H1 (cell line): ENCODE measurements at regions of chr1 and their contacts with region 1.

Region 1: GRCh38 chr1:214328770-214329469 is 48.0 kb downstream of the SMYD2 start:
- DNase-seq: peak; percentile 75 to 87
- H3K4me3 ChIP-seq: no peak overlapping the region
- H3K27ac ChIP-seq: no peak overlapping the region
- H3K4me1 ChIP-seq: no peaks in the 10 kb centered on the region; a peak in 2 of 7 replicates
- H3K27me3 ChIP-seq: no peaks in the 10 kb centered on the region
- CTCF ChIP-seq: peak; percentile 91 to 97 (median 96)
- EP300 ChIP-seq: peak in 1 of 2 experiments; percentile 8; a peak in 1 of 3 replicates
- POLR2A ChIP-seq: no peak
- RAD21 ChIP-seq: peak; percentile 100

Region 2: GRCh38 chr1:214241060-214241459 is 87.9 kb before region 1 on chr1:
- CTCF ChIA-PET with region 1: interaction called, 79 read pairs
- POLR2A ChIA-PET with region 1: no interaction called
- DNase-seq: no peak
- H3K4me3 ChIP-seq: no peak overlapping the region
- H3K27ac ChIP-seq: no peak overlapping the region
- H3K4me1 ChIP-seq: no peaks in the 10 kb centered on the region; a peak in 1 of 7 replicates
- H3K27me3 ChIP-seq: no peaks in the 10 kb centered on the region
- CTCF ChIP-seq: no peak
- EP300 ChIP-seq: no peak
- POLR2A ChIP-seq: no peak
- RAD21 ChIP-seq: no peak

Region 3: GRCh38 chr1:214296860-214297745 is 31.8 kb before region 1 on chr1:
- CTCF ChIA-PET with region 1: interaction called, 108 read pairs
- POLR2A ChIA-PET with region 1: no interaction called
- DNase-seq: no peak
- H3K4me3 ChIP-seq: peak overlapping the region in 1 of 4 experiments; percentile 13; a peak in 1 of 8 replicates
- H3K27ac ChIP-seq: no peak overlapping the region
- H3K4me1 ChIP-seq: peaks cover 0 to 4% (median 2%) of the 10 kb centered on the region in 4 experiments; a peak in 3 of 7 replicates
- H3K27me3 ChIP-seq: peaks cover 2 to 24% (median 21%) of the 10 kb centered on the region in 4 experiments
- CTCF ChIP-seq: no peak
- EP300 ChIP-seq: no peak
- POLR2A ChIP-seq: no peak
- RAD21 ChIP-seq: no peak

Region 4: DNA sequence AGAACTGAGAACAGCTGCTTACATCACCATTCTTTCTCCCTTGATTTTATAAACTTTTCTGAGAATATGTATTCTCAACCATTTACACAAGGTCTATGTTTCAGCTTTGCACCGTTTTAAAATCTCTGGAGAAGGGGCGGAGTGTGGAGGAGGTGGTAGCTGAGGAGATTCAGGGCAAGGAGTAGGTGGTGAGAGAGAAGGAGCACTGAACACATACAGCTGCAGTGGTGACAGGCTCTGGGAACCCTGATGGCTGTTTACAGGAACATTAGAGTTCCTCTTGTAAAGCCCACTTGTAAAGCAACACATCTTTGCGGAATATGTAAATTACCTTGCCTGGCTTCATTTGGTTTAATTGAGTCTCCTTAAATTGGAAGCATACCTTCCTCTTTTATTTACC is 41.7 kb after region 1 on chr1:
- CTCF ChIA-PET with region 1: interaction called, 16 read pairs
- POLR2A ChIA-PET with region 1: no interaction called
- DNase-seq: no peak
- H3K4me3 ChIP-seq: no peak overlapping the region
- H3K27ac ChIP-seq: no peak overlapping the region
- H3K4me1 ChIP-seq: no peaks in the 10 kb centered on the region; a peak in 1 of 7 replicates
- H3K27me3 ChIP-seq: no peaks in the 10 kb centered on the region
- CTCF ChIP-seq: no peak
- EP300 ChIP-seq: no peak
- POLR2A ChIP-seq: no peak; a peak in 1 of 3 replicates
- RAD21 ChIP-seq: no peak

Region 5: DNA sequence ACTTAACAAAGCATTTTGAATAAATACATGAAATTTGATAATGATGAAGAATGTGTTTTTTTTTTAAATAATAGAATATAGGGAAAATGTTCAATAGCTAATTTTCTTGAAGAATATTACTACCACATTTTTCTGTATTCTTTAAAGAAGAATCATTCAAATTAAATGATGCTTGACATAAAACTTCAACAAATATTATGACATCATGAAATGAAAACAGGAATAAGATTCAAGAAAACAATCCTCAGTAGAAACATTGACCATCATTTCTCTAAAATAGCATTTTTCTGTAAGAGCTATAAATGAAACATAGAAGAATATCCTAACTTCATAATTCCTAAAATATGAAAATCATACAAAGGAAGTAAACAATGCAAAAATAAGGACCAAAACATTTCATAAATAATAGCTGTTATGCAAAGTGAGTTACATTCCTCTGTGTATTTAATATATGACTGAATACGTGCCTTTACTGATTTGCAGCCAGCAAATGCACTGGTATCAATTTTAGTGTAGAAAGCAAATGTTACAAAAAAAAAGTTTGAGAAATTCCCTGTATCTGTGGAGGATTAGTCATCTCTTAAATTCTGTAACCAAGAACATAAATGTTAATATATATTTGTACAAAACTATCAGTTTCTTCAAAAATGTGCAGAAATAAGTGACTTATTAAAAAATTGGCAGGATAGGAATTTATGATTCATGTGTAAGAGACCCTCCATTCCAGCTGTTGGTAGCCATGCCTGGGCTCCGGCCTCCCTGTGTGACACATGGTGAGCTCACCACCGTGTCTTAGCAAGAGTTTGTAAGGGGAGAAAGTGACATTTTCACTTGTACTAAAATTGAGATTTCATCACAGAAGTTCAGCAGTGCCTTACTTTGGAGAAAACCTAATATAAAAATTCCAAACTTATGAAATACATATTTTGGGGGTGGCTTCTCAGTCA is 237.5 kb after region 1 on chr1:
- CTCF ChIA-PET with region 1: interaction called, 17 read pairs
- POLR2A ChIA-PET with region 1: no interaction called
- DNase-seq: no peak
- H3K4me3 ChIP-seq: no peak overlapping the region
- H3K27ac ChIP-seq: no peak overlapping the region
- H3K4me1 ChIP-seq: no peaks in the 10 kb centered on the region
- H3K27me3 ChIP-seq: no peaks in the 10 kb centered on the region
- CTCF ChIP-seq: no peak
- EP300 ChIP-seq: no peak
- POLR2A ChIP-seq: no peak
- RAD21 ChIP-seq: no peak

Region 6: DNA sequence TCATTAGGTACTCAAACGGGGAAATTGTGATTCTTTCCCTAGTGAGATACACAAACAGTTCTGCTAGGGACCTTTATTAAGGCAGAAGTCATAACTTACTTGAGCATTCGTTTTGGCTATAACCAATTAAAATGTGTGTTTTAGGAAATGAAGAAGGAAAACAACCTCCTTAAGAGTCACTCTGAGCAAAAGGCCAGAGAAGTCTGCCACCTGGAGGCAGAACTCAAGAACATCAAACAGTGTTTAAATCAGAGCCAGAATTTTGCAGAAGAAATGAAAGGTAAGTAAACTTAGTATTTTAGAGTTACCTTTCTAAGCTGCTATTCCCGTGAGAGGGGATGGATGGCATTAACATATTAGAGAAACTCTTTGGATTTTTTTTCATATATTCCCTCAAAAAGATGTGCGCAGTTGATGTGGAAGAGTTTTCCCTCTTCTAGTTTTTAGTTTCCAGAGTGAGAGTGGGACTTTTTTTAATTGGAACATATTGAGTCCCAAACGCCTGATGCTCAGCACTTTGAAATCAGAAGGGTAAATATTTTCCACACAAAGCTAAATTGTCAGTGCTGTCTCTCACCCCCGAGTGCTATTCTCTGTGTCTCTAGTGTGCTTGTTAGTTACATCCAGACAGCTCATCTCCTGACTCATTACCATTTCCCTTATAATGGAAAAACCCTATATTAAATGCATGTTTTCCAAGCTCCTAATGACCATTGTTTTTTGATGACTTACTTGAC is 309.0 kb after region 1 on chr1:
- CTCF ChIA-PET with region 1: interaction called, 29 read pairs
- POLR2A ChIA-PET with region 1: no interaction called
- DNase-seq: no peak
- H3K4me3 ChIP-seq: no peak overlapping the region
- H3K27ac ChIP-seq: no peak overlapping the region
- H3K4me1 ChIP-seq: no peaks in the 10 kb centered on the region
- H3K27me3 ChIP-seq: no peaks in the 10 kb centered on the region
- CTCF ChIP-seq: peak in 2 of 3 experiments; percentile 53 to 66; a peak in 3 of 4 replicates
- EP300 ChIP-seq: no peak
- POLR2A ChIP-seq: no peak
- RAD21 ChIP-seq: peak; percentile 33 to 44; a peak in 3 of 4 replicates

Region 7: DNA sequence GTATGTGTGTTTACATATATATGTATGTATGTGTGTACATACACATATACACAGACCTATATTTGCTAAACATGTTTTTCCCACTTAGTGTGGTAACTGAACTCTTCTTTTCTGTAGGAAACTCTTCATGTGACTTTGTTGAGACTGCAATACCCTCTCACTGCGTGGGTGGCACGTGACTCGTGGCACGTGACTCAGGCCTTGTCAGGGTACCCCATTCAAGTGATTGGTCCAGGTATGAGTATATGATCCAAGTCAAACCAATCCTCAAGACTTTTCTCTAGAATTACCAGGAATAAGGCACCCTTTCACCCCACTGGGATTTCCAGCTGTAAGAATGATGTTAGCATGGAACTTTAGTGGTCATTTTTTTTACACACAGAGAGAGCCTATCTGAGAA is 604.5 kb after region 1 on chr1:
- CTCF ChIA-PET with region 1: no interaction called
- POLR2A ChIA-PET with region 1: no interaction called
- DNase-seq: no peak
- H3K4me3 ChIP-seq: no peak overlapping the region
- H3K27ac ChIP-seq: no peak overlapping the region
- H3K4me1 ChIP-seq: no peaks in the 10 kb centered on the region
- H3K27me3 ChIP-seq: no peaks in the 10 kb centered on the region
- CTCF ChIP-seq: no peak
- EP300 ChIP-seq: no peak
- POLR2A ChIP-seq: no peak
- RAD21 ChIP-seq: no peak